Activated CD4-positive, alpha-beta memory T cell treated with anti-CD3 and anti-CD28 coated beads for 36 hours (primary cell): ENCODE measurements at regions of chr3 and their contacts with region 1.

Region 1: GRCh38 chr3:57956119-57956832 is 51.9 kb upstream of the FLNB start:
- DNase-seq: no peak
- H3K4me3 Mint-ChIP-seq: no peak overlapping the region
- H3K27ac Mint-ChIP-seq: no peak overlapping the region
- H3K4me1 Mint-ChIP-seq: peaks cover 5% of the 10 kb centered on the region
- H3K27me3 Mint-ChIP-seq: no peaks in the 10 kb centered on the region

Region 2: GRCh38 chr3:57942872-57943283 is 13.4 kb before region 1 on chr3:
- CTCF ChIA-PET with region 1: no interaction called
- POLR2A ChIA-PET with region 1: no interaction called
- intact Hi-C with region 1: no loop called
- DNase-seq: no peak
- H3K4me3 Mint-ChIP-seq: no peak overlapping the region
- H3K27ac Mint-ChIP-seq: no peak overlapping the region
- H3K4me1 Mint-ChIP-seq: no peaks in the 10 kb centered on the region
- H3K27me3 Mint-ChIP-seq: no peaks in the 10 kb centered on the region

Region 3: DNA sequence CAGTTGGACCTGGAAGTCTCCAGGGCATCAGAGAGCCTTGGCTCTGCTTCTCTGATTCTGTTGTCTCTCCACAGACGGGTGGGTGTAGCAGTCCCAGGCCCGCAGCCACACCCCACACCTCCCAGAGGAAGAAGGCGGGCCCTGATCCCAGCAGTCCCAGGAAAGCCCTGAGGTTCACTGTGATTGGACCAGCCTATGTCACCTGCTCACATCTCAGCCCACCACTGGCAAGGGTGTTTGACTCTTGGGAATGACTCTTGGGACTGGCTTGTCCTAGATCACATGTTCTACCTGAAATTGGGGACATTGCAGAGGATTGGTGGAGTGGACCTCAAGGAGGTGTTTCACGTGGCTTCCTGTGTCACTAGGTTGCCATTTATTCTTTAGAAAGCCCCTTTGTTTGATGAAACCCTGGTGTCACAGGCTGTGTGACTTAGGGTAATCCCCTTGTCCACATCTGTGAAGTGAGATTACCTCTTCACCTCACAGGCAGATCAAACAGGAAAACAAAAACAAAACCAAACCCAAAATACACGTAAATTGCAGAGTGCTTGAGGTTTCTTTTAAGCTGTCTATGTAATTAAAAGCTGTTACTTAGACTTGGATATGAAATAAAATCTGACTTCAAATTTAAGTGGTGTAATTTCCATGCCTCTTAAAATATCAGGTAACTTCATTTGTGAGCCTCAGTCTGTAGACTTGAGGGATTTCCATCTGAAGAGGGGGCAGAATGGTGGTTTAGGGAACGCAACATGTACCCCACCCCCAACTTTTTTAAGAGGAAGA is 78.7 kb after region 1 on chr3:
- CTCF ChIA-PET with region 1: no interaction called
- POLR2A ChIA-PET with region 1: no interaction called
- intact Hi-C with region 1: loop called (anchors 2 kb)
- DNase-seq: peak; percentile 64
- H3K4me3 Mint-ChIP-seq: peak overlapping the region; percentile 21
- H3K27ac Mint-ChIP-seq: peak overlapping the region; percentile 71
- H3K4me1 Mint-ChIP-seq: peaks cover 37% of the 10 kb centered on the region
- H3K27me3 Mint-ChIP-seq: no peaks in the 10 kb centered on the region

Region 4: DNA sequence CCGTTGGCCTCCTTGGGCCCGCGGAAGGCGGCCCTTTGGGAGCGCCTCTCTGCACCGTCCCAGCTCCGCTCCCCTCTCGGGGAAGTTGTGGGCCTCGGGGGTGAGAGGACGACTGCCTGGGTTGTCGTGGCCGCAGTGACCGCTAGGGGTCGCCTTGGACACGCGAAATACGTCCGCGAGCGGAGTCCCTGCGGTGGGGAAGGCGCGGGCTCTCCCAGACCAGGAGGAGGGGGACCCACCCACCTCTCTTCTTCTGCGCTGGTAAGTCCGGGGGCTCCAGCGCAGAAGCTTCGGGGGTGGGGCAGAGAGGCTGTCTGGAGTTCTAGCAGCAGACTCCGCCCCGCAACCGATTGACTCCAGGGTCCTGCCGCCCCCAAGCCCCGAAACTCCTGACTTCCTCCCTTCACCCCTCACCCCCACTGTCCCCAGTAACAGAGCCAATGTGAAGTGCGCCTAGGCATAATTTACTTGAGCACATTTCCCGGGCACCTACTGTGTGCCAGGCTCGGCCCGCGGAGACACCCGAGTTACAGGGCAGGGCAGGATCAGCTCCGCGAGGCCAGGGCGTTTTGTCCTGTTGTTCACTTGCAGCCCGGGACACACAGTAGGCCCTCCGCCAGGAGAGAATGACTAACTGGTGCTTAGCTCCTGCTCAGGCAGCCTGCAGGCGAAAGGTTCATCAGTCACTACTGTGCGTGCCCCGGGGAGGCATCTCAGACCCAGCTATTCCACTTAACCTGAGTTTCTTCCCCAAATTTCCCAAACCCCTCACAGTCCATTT is 221.7 kb after region 1 on chr3:
- CTCF ChIA-PET with region 1: interaction called, 4 read pairs
- POLR2A ChIA-PET with region 1: no interaction called
- intact Hi-C with region 1: loop called (anchors 2 kb)
- DNase-seq: peak; percentile 92
- H3K4me3 Mint-ChIP-seq: peak overlapping the region; percentile 39
- H3K27ac Mint-ChIP-seq: no peak overlapping the region
- H3K4me1 Mint-ChIP-seq: peaks cover 11% of the 10 kb centered on the region
- H3K27me3 Mint-ChIP-seq: no peaks in the 10 kb centered on the region